MCF 10A (cell line): ENCODE measurements at regions of chr7 and their contacts with region 1.

Region 1: DNA sequence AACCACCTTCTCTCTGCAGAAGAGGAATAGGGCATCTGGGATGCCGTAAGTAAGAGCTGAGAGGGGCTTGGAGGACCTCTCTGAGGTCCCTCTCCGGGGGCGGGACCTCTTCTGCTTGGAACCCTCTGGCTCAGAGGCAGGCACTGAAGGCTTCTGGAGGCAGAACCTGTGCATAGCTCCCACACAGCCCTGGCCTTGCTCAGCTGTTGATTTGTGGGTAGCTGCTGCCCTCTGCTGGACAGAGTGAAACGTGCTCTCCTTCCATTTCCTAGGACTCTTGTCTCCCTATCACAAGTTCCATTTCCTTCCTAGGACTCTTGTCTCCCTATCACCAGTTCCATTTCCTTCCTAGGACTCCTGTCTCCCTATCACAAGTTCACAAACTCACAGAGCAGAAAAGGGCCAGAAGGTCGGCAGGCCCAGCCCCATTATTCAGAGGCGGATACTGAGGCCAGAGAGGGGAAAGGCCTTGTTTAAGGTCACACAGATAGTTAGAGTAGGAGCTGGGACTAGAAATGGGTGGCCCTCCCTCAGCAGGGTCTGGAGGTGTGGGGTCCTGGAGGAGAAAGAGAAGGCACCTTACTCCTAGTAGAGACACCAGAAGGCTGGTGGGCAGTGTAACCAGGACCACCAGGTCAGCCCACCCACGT is 30.3 kb upstream of the GARS1 start:
- DNase-seq: peak; percentile 91
- H3K4me3 Mint-ChIP-seq: no peak overlapping the region
- H3K27ac Mint-ChIP-seq: peak overlapping the region; percentile 64
- H3K4me1 Mint-ChIP-seq: peaks cover 9% of the 10 kb centered on the region
- H3K27me3 Mint-ChIP-seq: no peaks in the 10 kb centered on the region
- CTCF ChIP-seq: peak; percentile 95

Region 2: DNA sequence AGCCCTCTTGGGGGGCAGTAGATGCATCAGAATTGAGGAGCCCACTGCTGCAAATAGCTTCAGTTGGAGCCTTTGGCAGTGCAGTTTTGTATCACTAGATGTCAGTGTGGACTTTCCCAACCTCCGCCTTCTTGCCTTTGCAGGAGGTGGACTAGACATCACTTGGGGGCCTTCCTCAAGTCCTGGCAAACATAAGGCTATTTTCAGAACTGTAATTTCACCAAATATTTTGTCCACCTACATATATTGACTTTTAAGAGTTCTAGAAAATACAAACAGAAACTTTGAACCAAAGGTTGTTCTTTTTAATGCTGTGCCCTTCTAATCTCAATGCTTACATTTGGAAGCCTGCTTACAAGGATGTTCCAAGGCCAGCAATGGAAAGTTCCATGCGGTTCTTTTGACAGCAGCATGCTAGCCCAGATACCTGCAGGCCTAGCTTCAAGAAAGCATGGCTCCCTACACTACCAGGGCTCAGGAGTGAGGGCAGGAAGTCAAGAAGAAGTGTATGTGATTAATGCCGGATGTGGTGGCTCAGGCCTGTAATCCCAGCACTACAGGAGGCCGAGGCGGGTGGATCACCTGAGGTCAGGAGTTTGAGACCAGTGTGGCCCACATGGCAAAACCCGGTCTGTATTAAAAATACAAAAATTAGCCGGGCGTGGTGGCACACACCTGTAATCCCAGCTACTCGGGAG is 288.0 kb before region 1 on chr7:
- CTCF ChIA-PET with region 1: interaction called, 38 read pairs
- POLR2A ChIA-PET with region 1: interaction called, 3 read pairs
- intact Hi-C with region 1: loop called (anchors 1 kb)
- DNase-seq: peak; percentile 63
- H3K4me3 Mint-ChIP-seq: no peak overlapping the region
- H3K27ac Mint-ChIP-seq: no peak overlapping the region
- H3K4me1 Mint-ChIP-seq: peaks cover 6% of the 10 kb centered on the region
- H3K27me3 Mint-ChIP-seq: no peaks in the 10 kb centered on the region
- CTCF ChIP-seq: peak; percentile 76

Region 3: GRCh38 chr7:30504347-30505173 is 59.8 kb before region 1 on chr7 and contains the start of gene GGCT:
- CTCF ChIA-PET with region 1: interaction called, 150 read pairs
- POLR2A ChIA-PET with region 1: interaction called, 6 read pairs
- intact Hi-C with region 1: no loop called
- DNase-seq: peak; percentile 99
- H3K4me3 Mint-ChIP-seq: peak within 1 kb of the TSS; percentile 83
- H3K27ac Mint-ChIP-seq: peak within 1 kb of the TSS; percentile 77
- H3K4me1 Mint-ChIP-seq: peaks cover 30% of the 10 kb centered on the region
- H3K27me3 Mint-ChIP-seq: no peaks in the 10 kb centered on the region
- CTCF ChIP-seq: no peak
- total RNA-seq, gene GGCT: 48.3 and 64.8 TPM in 2 replicates

Region 4: GRCh38 chr7:30515761-30516160 is 48.6 kb before region 1 on chr7:
- CTCF ChIA-PET with region 1: interaction called, 150 read pairs
- POLR2A ChIA-PET with region 1: interaction called, 6 read pairs
- intact Hi-C with region 1: loop called (anchors 1 kb)
- DNase-seq: no peak
- H3K4me3 Mint-ChIP-seq: no peak overlapping the region
- H3K27ac Mint-ChIP-seq: no peak overlapping the region
- H3K4me1 Mint-ChIP-seq: peaks cover 4% of the 10 kb centered on the region
- H3K27me3 Mint-ChIP-seq: no peaks in the 10 kb centered on the region
- CTCF ChIP-seq: no peak

Region 5: DNA sequence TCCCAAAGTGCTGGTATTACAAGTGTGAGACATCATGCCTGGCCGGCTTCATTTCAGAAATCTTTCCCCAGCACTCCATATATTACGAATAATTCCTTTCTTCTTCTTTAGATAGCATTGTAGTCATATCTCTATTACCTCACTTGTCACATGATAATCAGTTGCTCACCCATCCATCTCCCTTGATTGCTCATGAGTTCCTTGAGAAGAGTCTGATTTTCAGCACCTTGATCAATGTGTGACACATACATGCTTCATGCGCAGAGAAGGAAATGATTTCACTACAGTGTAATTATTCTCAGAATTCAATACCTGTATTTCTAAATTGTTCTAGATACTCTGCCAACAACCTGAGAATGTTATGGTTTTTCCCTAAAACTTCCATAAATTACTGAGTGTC is 33.1 kb before region 1 on chr7:
- CTCF ChIA-PET with region 1: interaction called, 15 read pairs
- POLR2A ChIA-PET with region 1: no interaction called
- intact Hi-C with region 1: no loop called
- DNase-seq: peak; percentile 13
- H3K4me3 Mint-ChIP-seq: no peak overlapping the region
- H3K27ac Mint-ChIP-seq: no peak overlapping the region
- H3K4me1 Mint-ChIP-seq: peaks cover 5% of the 10 kb centered on the region
- H3K27me3 Mint-ChIP-seq: no peaks in the 10 kb centered on the region
- CTCF ChIP-seq: no peak

Region 6: DNA sequence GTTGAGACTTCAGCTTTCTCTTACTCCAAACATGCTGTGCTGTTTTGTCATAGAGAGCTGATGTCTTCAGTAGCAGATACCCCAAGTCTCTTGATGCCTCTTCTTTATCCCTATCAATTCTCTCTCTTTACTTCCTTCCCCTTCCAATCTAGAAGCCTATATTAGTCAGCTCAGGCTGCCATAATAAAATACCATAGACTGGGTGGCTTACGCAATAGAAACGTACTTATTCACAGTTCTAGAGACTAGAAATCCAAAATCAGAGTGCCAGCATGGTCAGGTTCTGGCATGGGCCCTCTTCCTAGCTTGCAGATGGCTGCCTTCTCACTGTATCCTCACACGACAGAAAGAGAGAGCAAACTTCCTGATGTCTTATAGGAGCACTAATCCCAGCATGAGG is 21.3 kb after region 1 on chr7:
- CTCF ChIA-PET with region 1: interaction called, 77 read pairs
- POLR2A ChIA-PET with region 1: interaction called, 3 read pairs
- intact Hi-C with region 1: no loop called
- DNase-seq: peak; percentile 7
- H3K4me3 Mint-ChIP-seq: no peak overlapping the region
- H3K27ac Mint-ChIP-seq: peak overlapping the region; percentile 23
- H3K4me1 Mint-ChIP-seq: no peaks in the 10 kb centered on the region
- H3K27me3 Mint-ChIP-seq: no peaks in the 10 kb centered on the region
- CTCF ChIP-seq: no peak

Region 7: DNA sequence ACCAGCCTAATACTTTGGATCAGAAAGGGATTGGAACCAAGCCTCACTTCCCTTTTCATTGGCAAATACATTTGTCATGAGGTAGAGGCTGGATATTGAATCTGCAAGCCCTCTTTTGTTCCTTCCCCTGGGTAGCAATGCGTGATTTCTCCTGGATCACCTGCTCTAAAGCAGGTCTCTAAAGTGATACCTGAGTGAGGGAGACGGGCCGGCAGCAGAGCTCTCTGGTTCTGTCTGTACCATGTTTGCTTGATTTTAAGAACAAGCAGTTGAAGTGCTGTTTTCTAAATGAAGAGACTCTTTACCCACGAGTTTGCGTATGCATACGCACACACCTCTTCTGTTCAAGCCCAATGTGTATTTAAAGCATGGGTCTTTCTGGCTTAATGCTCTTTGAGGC is 71.4 kb after region 1 on chr7:
- CTCF ChIA-PET with region 1: no interaction called
- POLR2A ChIA-PET with region 1: no interaction called
- intact Hi-C with region 1: no loop called
- DNase-seq: no peak
- H3K4me3 Mint-ChIP-seq: no peak overlapping the region
- H3K27ac Mint-ChIP-seq: no peak overlapping the region
- H3K4me1 Mint-ChIP-seq: no peaks in the 10 kb centered on the region
- H3K27me3 Mint-ChIP-seq: no peaks in the 10 kb centered on the region
- CTCF ChIP-seq: no peak